IMR-90 (cell line): ENCODE measurements at regions of chr19 and their contacts with region 1.

Region 1: DNA sequence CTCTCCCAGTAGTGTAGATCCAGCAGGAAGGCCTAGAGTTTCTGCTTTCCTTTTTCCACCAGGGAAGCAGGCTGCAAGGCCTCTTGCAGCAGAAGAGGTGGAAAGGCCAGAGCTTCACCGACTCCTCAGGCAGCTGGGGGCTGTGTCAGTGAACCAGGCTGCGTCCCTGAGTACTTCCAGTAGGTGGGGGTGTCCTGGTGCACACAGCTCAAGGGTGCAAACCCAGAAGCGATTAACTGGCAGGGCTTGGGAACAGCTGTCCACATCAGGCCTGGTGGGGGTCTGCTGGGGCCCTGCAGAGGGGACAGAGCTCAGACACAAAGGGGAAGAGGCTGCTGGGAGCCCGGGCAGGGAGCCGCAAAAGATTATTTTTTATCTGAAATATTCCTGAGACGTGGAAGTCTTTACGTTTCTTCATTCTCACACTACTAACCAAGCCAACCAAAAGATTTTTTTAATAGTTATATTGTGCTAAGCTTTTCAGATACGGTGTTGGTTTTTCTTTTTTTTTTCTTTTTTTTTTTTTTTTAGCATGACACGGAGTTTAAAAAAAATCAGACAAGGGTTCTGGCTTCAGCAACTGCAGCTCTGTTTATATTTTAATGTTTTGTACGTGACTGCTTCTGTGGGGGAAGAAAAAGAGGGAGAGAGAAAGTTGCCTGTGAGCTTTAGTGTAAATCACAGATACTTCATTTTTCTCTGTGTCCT is 11.0 kb downstream of the TSHZ3 start:
- DNase-seq: peak; percentile 85
- ATAC-seq: peak; percentile 79
- H3K4me3 ChIP-seq: no peak overlapping the region
- H3K27ac ChIP-seq: peak overlapping the region; percentile 97
- H3K4me1 ChIP-seq: peaks cover 53% of the 10 kb centered on the region
- H3K27me3 ChIP-seq: no peaks in the 10 kb centered on the region
- CTCF ChIP-seq: peak; percentile 69
- POLR2A ChIP-seq: no peak
- RAD21 ChIP-seq: peak; percentile 62

Region 2: DNA sequence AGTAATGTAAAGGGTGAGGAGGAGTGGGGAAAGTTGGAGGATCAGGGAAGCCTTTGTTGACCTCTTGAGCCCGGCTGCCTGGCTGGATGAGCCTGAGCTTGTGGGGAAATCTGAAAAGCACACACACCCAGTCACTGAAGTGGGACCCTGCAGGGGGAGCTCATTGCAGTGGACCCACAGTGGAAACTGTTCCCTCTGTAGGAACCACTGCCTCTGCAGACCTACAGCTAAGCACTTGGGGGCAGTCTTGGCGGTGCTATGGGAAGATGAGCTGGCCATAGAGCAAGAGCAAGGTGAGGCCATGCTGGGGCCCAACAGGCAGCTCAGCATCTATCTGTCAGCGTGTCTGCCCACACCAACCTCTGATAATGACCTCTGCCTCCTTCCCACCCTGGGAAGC is 283.8 kb before region 1 on chr19:
- CTCF ChIA-PET with region 1: no interaction called
- POLR2A ChIA-PET with region 1: no interaction called
- dilution Hi-C with region 1: no loop called
- in situ Hi-C with region 1: no loop called
- intact Hi-C with region 1: loop called (anchors 2 kb)
- DNase-seq: peak; percentile 83
- ATAC-seq: peak; percentile 98
- H3K4me3 ChIP-seq: no peak overlapping the region
- H3K27ac ChIP-seq: no peak overlapping the region
- H3K4me1 ChIP-seq: no peaks in the 10 kb centered on the region
- H3K27me3 ChIP-seq: peaks cover 5% of the 10 kb centered on the region
- CTCF ChIP-seq: peak; percentile 95
- POLR2A ChIP-seq: no peak
- RAD21 ChIP-seq: peak; percentile 97

Region 3: DNA sequence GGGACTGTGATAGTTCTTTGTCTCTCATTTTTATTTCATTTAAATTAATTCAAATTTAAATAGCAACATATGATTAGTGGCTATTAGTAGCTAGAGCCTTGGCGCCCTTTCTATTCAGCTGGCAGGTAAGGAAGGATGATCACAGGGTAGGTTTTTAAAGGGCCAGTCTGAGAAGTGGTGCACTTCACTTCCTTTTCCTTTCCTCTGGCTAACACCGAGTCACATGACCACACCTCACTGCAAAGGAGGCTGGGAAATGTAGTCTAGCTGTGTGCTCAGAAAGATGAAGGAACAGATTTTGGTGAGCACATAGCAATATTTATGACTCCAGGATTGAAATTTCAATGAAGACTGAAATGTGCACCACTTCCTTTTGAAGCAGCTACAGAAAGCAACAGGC is 117.7 kb before region 1 on chr19:
- CTCF ChIA-PET with region 1: interaction called, 4 read pairs
- POLR2A ChIA-PET with region 1: no interaction called
- dilution Hi-C with region 1: no loop called
- in situ Hi-C with region 1: no loop called
- intact Hi-C with region 1: loop called (anchors 5 kb)
- DNase-seq: no peak
- ATAC-seq: no peak
- H3K4me3 ChIP-seq: no peak overlapping the region
- H3K27ac ChIP-seq: no peak overlapping the region
- H3K4me1 ChIP-seq: peaks cover 25% of the 10 kb centered on the region
- H3K27me3 ChIP-seq: no peaks in the 10 kb centered on the region
- CTCF ChIP-seq: no peak
- POLR2A ChIP-seq: no peak
- RAD21 ChIP-seq: no peak

Region 4: DNA sequence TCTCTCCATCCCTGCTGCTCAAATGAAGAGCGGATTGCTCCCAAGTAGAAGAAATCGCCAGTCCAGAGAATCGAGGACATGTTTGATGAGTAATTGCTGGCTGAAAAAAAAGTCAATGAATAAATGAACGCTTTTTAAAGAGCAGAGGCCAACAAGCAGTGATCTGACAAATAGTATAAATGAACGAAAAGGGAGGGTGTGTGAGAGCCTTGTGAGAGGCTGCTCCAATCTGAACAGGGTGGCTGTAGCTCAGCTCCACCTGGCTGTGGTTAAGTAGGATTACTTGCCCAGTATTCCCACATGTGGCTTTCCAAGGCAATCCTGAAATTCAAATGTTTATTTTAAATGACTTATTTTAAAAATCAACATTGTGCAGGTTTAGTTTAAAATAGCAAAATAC is 106.0 kb before region 1 on chr19:
- CTCF ChIA-PET with region 1: no interaction called
- POLR2A ChIA-PET with region 1: no interaction called
- dilution Hi-C with region 1: no loop called
- in situ Hi-C with region 1: loop called (anchors 5 kb)
- intact Hi-C with region 1: no loop called
- DNase-seq: peak; percentile 72
- ATAC-seq: no peak
- H3K4me3 ChIP-seq: no peak overlapping the region
- H3K27ac ChIP-seq: peak overlapping the region; percentile 56
- H3K4me1 ChIP-seq: peaks cover 9% of the 10 kb centered on the region
- H3K27me3 ChIP-seq: no peaks in the 10 kb centered on the region
- CTCF ChIP-seq: no peak
- POLR2A ChIP-seq: no peak
- RAD21 ChIP-seq: peak; percentile 24

Region 5: GRCh38 chr19:31436231-31436741 is 98.1 kb after region 1 on chr19:
- CTCF ChIA-PET with region 1: no interaction called
- POLR2A ChIA-PET with region 1: no interaction called
- dilution Hi-C with region 1: no loop called
- in situ Hi-C with region 1: no loop called
- intact Hi-C with region 1: no loop called
- DNase-seq: peak; percentile 24
- ATAC-seq: no peak
- H3K4me3 ChIP-seq: no peak overlapping the region
- H3K27ac ChIP-seq: no peak overlapping the region
- H3K4me1 ChIP-seq: peaks cover 3% of the 10 kb centered on the region; the same call in 1 of the 2 replicates
- H3K27me3 ChIP-seq: peaks cover 5% of the 10 kb centered on the region
- CTCF ChIP-seq: no peak
- POLR2A ChIP-seq: no peak
- RAD21 ChIP-seq: no peak

Region 6: DNA sequence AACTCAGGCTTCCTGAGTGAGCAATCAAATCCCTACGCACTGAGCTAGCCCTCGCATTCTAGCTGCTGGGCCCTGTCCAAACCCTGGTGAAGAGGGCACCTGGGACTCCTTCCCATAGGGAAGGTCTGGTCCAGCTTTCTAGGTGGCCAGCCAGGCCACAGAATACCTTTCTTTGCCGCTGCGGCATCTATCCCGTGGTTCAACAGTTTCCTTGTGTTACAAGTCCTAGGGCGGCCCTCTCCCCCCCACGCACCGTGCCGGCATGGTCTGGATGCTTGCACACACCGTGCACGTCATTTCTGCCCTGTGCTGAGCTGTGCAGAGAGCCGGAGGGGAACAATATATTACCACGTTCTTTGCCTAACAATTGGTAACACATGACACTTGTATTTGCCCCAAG is 175.6 kb after region 1 on chr19:
- CTCF ChIA-PET with region 1: no interaction called
- POLR2A ChIA-PET with region 1: no interaction called
- dilution Hi-C with region 1: no loop called
- in situ Hi-C with region 1: no loop called
- intact Hi-C with region 1: no loop called
- DNase-seq: no peak
- ATAC-seq: no peak
- H3K4me3 ChIP-seq: no peak overlapping the region
- H3K27ac ChIP-seq: no peak overlapping the region
- H3K4me1 ChIP-seq: no peaks in the 10 kb centered on the region
- H3K27me3 ChIP-seq: no peaks in the 10 kb centered on the region; the same call in 1 of the 2 replicates
- CTCF ChIP-seq: no peak
- POLR2A ChIP-seq: no peak
- RAD21 ChIP-seq: no peak